ENCODE measurements at regions of chr3 and their contacts with region 1.

Region 1: GRCh38 chr3:15815696-15816095 is 17.9 kb upstream of the ANKRD28 start:
- DNase-seq: no peak

Region 2: DNA sequence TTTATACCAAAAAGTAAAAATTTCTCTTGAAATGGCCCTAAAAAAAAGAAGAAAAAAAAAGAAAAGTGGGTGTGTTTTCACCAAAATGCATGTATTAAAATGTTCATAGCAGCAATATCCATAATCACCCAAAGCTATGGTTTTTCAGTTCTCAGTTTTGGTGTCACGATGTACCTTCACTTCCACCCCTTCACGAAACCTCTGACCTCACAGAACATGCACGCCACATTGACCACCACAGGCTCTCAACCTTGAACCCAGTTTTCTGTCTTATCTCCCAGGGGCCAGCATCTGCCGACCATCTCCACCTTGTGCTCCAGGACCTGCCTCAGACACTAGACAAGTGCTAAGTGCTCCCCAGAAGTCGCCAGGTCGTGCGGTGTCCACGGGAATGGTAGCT is 324.6 kb before region 1 on chr3:
- intact Hi-C with region 1: no loop called
- DNase-seq: no peak

Region 3: DNA sequence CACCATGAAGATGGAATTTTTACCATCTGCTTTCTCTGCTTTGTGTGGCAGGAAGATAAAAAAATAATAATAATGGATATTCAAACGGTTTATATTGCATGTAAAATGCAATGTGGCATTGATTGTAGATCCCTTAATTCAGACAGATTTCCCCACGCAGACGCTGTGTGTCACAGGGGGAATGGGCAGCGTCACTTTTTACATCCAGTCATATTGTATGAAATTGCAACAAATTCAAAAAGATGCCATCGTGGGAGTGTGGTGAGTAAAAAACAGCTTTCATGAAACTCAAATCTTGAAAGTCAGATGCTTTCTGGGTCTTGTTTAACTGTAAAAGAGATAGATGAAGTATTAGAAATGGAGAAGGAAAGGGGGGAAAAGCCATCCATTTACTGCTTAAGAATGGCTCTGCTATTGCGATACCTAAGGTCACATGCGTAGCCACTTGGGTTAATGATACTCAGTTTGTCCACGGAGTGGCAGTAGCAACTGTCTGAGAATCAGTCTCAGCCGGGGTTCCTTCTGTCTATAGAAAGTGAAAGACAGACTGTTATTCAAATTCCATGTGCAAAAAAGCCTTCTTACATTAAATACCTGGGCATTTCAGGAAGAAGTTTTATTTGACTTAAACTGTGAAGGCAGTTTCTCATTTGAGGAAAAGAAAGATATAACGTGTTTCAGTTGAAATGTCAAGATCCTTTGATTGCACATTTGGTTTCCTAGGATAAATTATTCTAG is 185.7 kb before region 1 on chr3:
- intact Hi-C with region 1: loop called (anchors 2 kb)
- DNase-seq: no peak

Region 4: GRCh38 chr3:15667484-15667883 is 148.2 kb before region 1 on chr3:
- intact Hi-C with region 1: no loop called
- DNase-seq: no peak

Region 5: GRCh38 chr3:16048435-16049318 is 233.0 kb after region 1 on chr3:
- intact Hi-C with region 1: loop called (anchors 5 kb)
- DNase-seq: no peak